ENCODE measurements at regions of chr9 and their contacts with region 1.

Region 1: GRCh38 chr9:14652729-14653377 is 40.4 kb downstream of the ZDHHC21 start:
- DNase-seq: no peak
- ATAC-seq: peak; percentile 68
- H3K4me3 ChIP-seq: no peak overlapping the region
- H3K27ac ChIP-seq: no peak overlapping the region
- H3K4me1 ChIP-seq: no peaks in the 10 kb centered on the region
- H3K27me3 ChIP-seq: no peaks in the 10 kb centered on the region
- CTCF ChIP-seq: peak; percentile 24 to 39 (median 33); a peak in 4 of 6 replicates
- EP300 ChIP-seq: no peak
- POLR2A ChIP-seq: no peak
- RAD21 ChIP-seq: no peak

Region 2: DNA sequence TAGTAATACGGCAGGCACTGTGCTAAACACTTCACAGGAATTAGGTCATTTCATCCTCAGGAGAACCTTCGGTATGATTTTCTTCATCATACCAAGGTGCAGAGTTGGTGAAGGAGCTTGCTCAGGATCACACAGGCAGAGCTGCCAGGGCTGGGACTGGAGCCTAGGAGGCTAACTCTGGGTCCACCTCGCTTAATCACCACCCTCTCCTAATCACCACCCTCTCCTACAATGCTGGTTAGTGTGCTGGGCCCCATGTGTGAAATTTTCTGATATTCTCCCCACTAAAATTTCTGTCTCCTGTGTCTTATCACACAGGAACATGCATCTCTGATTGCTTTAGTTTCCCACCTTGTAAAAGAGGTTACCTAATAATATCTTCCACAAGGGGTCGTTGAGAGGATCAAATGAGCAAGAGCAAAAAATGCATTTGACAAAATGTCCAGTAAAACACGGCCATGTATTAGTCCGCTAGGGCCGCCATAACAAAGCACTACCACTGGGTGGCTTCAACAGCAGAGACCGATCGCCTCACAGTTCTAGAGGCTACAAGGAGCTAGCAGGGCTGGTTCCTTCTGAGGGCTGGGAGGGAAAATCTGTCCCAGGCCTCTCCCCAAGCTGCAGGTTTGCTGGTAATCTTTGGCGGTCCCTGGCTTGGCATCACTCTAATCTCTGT is 210.7 kb before region 1 on chr9:
- CTCF ChIA-PET with region 1: interaction called, 4 read pairs
- POLR2A ChIA-PET with region 1: no interaction called
- RAD21 ChIA-PET with region 1: no interaction called
- SMC1A ChIA-PET with region 1: interaction called, 3 read pairs
- in situ Hi-C with region 1: no loop called
- intact Hi-C with region 1: loop called (anchors 5 kb)
- DNase-seq: no peak
- ATAC-seq: peak; percentile 90
- H3K4me3 ChIP-seq: no peak overlapping the region
- H3K27ac ChIP-seq: no peak overlapping the region
- H3K4me1 ChIP-seq: no peaks in the 10 kb centered on the region
- H3K27me3 ChIP-seq: no peaks in the 10 kb centered on the region; a peak in 1 of 4 replicates
- CTCF ChIP-seq: peak; percentile 12 to 48 (median 19); a peak in 3 of 6 replicates
- EP300 ChIP-seq: no peak
- POLR2A ChIP-seq: no peak
- RAD21 ChIP-seq: peak; percentile 29; the same call in 1 of the 2 replicates

Region 3: DNA sequence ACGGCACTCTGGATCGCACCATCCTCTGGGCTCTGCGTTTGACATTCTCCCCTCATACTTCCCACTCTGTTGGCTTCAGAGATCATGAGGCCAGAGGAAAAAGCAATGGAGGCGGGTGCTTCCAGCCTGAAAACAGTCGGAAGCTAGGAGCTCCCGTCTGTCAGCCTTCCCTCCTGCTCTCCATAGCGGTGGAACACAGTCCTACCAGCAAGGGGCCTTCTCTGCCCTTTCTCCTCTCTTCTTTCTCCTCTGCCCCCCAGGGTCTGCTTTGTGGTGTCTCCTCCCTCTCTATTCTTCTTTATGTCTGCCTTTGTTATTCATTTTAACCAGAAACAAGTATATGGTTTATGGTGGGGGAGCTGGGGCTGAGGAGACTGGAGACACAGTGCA is 186.4 kb before region 1 on chr9:
- CTCF ChIA-PET with region 1: interaction called, 6 read pairs
- POLR2A ChIA-PET with region 1: no interaction called
- RAD21 ChIA-PET with region 1: interaction called, 8 read pairs
- SMC1A ChIA-PET with region 1: interaction called, 4 read pairs
- in situ Hi-C with region 1: no loop called
- intact Hi-C with region 1: loop called (anchors 5 kb)
- DNase-seq: no peak
- ATAC-seq: no peak
- H3K4me3 ChIP-seq: no peak overlapping the region
- H3K27ac ChIP-seq: no peak overlapping the region
- H3K4me1 ChIP-seq: no peaks in the 10 kb centered on the region
- H3K27me3 ChIP-seq: no peaks in the 10 kb centered on the region; a peak in 1 of 4 replicates
- CTCF ChIP-seq: no peak
- EP300 ChIP-seq: no peak
- POLR2A ChIP-seq: no peak
- RAD21 ChIP-seq: no peak

Region 4: DNA sequence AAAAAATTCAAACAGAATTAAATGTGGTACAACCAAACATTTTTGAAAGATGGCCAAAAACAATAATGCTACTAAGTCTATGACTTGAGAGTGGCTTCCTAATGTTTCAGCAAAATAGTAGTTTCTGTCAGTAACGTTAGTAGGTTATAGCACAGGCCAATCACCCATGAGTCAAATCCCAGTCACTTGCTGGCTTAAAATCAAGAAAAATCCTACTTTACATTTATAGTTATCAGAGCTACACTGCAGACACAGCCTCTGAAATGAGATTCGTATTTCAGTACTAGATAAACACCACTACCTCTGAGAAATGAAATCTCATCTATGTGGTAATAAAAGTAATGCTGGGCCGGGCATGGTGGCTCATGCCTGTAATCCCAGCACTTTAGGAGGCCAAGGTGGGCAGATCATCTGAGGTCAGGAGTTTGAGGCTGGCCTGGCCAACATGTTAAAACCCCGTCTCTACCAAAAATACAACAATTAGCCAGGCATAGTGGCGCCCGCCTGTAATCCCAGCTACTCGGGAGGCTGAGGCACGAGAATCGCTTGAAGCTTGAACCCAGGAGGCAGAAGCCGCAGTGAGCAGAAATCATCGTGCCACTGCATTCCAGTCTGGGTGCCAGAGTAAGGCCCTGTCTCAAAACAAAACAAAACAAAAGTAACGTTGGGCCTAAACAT is 34.3 kb after region 1 on chr9:
- CTCF ChIA-PET with region 1: interaction called, 20 read pairs
- POLR2A ChIA-PET with region 1: no interaction called
- RAD21 ChIA-PET with region 1: interaction called, 7 read pairs
- SMC1A ChIA-PET with region 1: interaction called, 4 read pairs
- in situ Hi-C with region 1: no loop called
- intact Hi-C with region 1: no loop called
- DNase-seq: no peak
- ATAC-seq: no peak
- H3K4me3 ChIP-seq: no peak overlapping the region
- H3K27ac ChIP-seq: peak overlapping the region; percentile 82; the same call in 1 of the 2 replicates
- H3K4me1 ChIP-seq: peaks cover 21% of the 10 kb centered on the region
- H3K27me3 ChIP-seq: no peaks in the 10 kb centered on the region
- CTCF ChIP-seq: no peak
- EP300 ChIP-seq: no peak
- POLR2A ChIP-seq: no peak
- RAD21 ChIP-seq: no peak

Region 5: GRCh38 chr9:14797435-14797834 is 144.6 kb after region 1 on chr9:
- CTCF ChIA-PET with region 1: no interaction called
- POLR2A ChIA-PET with region 1: no interaction called
- RAD21 ChIA-PET with region 1: no interaction called
- SMC1A ChIA-PET with region 1: no interaction called
- in situ Hi-C with region 1: no loop called
- intact Hi-C with region 1: no loop called
- DNase-seq: no peak
- ATAC-seq: no peak
- H3K4me3 ChIP-seq: no peak overlapping the region
- H3K27ac ChIP-seq: no peak overlapping the region
- H3K4me1 ChIP-seq: no peaks in the 10 kb centered on the region
- H3K27me3 ChIP-seq: no peaks in the 10 kb centered on the region
- CTCF ChIP-seq: no peak
- EP300 ChIP-seq: no peak
- POLR2A ChIP-seq: no peak
- RAD21 ChIP-seq: no peak

Measured in GM12878 (cell line).